Heart left ventricle (tissue), 16 donors: ENCODE measurements at regions of chr16 and their contacts with region 1.

Region 1: GRCh38 chr16:78450255-78450654 is 350.8 kb downstream of the WWOX start:
- DNase-seq: no peak
- ATAC-seq: no peak
- H3K4me3 ChIP-seq: no peak overlapping the region
- H3K27ac ChIP-seq: no peak overlapping the region
- H3K4me1 ChIP-seq: peaks cover 0 to 7% (median 0%) of the 10 kb centered on the region in 12 donors
- H3K27me3 ChIP-seq: no peaks in the 10 kb centered on the region
- CTCF ChIP-seq: no peak
- POLR2A ChIP-seq: no peak

Region 2: DNA sequence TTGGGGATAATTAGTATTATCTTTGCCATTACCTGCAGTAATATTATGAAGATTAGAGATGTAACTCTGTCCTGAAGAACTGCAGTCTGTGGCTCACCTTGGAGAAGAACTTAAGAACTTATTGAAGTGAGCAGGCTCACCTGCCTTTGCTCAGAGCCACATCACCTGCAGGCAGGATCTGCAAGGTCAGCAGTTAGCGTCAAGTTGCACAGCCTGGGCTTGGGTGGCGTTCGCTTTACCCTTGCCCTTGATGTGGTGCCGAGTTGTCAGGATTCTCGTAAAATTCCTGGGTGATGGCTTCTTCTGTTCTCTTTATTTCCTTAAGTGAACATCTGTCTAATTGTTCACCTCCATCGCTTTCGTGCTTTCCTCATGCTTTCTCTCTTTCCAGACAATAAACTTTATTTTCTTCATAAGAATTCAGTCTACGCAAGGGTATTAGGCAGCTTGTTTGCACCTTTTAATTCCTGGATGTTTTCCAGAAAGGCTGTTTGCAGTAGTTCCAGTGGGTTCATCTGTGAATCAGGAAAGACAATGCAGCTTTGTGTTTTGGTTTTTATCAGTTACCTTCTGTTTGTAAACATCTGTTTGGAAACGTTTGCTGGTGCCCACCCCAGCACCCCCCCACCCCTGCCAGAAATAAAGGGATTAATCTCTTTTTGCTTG is 96.5 kb before region 1 on chr16:
- intact Hi-C with region 1: no loop called
- DNase-seq: no peak
- ATAC-seq: no peak
- H3K4me3 ChIP-seq: no peak overlapping the region
- H3K27ac ChIP-seq: no peak overlapping the region
- H3K4me1 ChIP-seq: no peaks in the 10 kb centered on the region
- H3K27me3 ChIP-seq: no peaks in the 10 kb centered on the region
- CTCF ChIP-seq: no peak
- POLR2A ChIP-seq: no peak

Region 3: DNA sequence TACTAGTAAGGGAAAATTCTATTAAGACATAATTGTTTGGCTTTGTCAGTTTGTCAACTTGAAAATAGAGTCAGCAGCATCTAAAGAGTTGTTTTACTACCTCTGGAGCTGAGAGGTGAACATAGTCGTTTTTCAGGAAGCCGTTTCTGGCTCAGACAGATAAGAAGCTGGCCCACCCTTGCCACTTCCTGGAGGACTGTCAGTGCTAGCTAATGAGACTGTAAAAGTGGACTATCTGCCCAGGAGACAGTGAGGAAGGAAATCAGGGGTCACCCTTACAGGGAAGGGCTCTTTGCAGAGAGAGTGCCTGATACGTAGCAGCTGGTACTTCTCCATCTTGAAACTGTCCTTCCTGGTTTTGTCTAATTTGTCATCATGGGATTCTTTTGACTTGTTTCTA is 22.1 kb before region 1 on chr16:
- intact Hi-C with region 1: loop called in 1 of 10 experiments (anchors 1 kb)
- DNase-seq: no peak
- ATAC-seq: no peak
- H3K4me3 ChIP-seq: no peak overlapping the region
- H3K27ac ChIP-seq: no peak overlapping the region
- H3K4me1 ChIP-seq: no peaks in the 10 kb centered on the region
- H3K27me3 ChIP-seq: no peaks in the 10 kb centered on the region
- CTCF ChIP-seq: no peak
- POLR2A ChIP-seq: no peak